Posterior vena cava (tissue), 2 donors: ENCODE measurements at regions of chr15 and their contacts with region 1.

Region 1: DNA sequence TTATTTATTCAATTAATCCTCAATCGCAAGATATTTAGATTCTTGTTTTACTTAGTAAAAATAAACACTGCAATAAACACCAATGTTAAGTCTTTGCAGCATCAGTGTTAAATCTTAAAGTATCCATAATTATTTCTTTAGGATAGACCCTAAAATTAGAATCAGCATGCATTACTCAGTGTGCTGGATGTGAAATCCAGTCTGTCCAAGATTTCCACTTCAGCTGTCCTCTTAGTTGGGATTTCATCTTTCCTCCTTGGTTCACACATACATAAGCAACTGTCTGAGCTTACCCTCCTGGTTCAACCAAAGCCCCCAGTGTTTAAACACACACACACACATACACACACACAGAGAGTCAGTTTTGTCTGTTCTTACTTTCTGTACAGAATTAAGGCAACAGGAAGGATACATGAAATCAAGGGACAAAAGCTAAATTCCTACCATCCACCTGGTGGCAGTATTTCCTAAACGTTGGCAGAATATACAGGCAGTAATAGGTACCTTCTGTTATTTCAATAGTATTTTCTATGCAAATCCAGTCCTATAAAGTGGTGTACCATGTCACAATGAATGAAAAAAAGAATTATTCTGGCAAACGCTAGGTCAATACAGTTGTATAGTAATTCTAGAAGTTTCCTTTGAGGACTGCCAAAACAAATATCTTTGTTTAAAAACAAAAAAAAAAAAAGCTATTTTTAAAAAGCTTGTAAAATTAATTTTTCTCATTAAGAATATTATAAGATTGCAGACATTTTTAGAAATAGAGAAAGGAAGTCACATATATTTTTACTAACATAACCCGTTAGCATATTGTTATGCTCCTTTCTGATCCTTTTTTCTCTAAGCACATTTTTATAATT is 27.3 kb upstream of the DMXL2 start:
- DNase-seq: no peak

Region 2: DNA sequence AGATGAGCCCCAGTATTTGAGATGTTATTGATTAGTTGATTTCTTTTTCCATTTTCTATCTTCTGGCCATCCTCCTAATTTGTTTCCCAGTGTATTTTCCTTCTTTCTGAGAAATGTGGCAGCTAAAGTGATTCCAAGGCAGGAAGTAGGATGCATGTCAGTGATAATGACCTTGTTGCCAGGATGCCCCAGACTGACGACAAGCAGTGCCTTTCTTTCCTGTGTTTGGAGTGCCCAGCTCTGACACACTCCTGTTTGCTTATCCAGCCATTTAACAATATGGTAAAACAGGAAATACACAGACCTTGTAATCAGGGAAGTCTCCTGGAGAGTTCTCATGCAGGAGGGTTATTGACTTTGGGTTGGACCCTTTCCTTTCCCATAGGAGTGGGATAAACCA is 121.9 kb after region 1 on chr15:
- intact Hi-C with region 1: loop called in 1 of 2 experiments (anchors 5 kb)
- DNase-seq: no peak

Region 3: GRCh38 chr15:51782357-51782896 is 132.5 kb after region 1 on chr15:
- intact Hi-C with region 1: loop called in 1 of 2 experiments (anchors 5 kb)
- DNase-seq: no peak